ENCODE measurements at regions of chr1 and their contacts with region 1.

Region 1: DNA sequence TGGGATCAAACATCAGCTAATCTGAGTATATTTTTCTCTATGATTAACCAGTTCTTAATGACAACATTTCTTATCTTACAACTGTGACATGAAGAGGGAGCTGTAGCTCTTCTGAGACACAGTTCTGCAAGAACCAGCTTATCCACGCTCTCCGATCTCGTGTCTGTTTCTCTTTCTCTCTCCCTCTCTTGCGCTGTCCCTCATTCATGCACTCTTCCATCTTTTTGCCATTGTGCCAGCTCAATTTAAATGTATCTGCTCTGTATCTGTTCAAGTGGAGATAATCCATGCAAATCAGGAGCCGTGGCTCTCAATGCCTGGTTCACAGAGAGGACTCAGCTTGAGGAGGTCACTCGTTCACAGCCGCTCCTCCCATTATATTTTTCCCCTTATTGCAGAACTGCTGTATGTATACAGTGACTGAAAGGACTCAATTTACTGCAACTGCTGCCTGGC is 494.7 kb upstream of the ADGRL2 start:
- DNase-seq: no peak
- ATAC-seq: peak; percentile 89 to 92

Region 2: DNA sequence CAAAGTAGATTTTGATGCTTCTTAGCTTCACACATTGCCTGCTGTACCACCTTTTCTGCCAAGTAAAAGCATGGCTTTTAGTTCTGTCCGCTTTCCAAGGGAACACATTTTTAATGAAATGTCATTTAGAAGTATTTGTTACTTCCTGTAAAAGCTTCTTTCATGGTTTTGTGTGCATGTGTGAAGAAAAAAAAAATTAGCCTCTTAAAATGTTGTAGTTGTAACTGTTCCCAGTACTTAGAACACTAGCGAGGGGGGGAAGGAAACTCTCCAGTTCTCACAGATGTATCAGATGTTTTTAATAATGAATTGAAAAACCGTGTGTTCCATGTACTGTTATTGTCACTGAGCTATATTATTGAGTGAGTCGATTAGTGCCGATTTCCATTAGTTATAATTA is 73.6 kb before region 1 on chr1:
- intact Hi-C with region 1: loop called in 1 of 2 experiments (anchors 5 kb)
- DNase-seq: no peak
- ATAC-seq: peak in 1 of 2 donors; percentile 34

Region 3: GRCh38 chr1:81377406-81377805 is 71.4 kb after region 1 on chr1:
- intact Hi-C with region 1: no loop called
- DNase-seq: no peak
- ATAC-seq: no peak

Region 4: GRCh38 chr1:81760477-81761097 is 454.6 kb after region 1 on chr1:
- intact Hi-C with region 1: loop called in 1 of 2 experiments (anchors 10 kb)
- DNase-seq: no peak
- ATAC-seq: no peak

Region 5: DNA sequence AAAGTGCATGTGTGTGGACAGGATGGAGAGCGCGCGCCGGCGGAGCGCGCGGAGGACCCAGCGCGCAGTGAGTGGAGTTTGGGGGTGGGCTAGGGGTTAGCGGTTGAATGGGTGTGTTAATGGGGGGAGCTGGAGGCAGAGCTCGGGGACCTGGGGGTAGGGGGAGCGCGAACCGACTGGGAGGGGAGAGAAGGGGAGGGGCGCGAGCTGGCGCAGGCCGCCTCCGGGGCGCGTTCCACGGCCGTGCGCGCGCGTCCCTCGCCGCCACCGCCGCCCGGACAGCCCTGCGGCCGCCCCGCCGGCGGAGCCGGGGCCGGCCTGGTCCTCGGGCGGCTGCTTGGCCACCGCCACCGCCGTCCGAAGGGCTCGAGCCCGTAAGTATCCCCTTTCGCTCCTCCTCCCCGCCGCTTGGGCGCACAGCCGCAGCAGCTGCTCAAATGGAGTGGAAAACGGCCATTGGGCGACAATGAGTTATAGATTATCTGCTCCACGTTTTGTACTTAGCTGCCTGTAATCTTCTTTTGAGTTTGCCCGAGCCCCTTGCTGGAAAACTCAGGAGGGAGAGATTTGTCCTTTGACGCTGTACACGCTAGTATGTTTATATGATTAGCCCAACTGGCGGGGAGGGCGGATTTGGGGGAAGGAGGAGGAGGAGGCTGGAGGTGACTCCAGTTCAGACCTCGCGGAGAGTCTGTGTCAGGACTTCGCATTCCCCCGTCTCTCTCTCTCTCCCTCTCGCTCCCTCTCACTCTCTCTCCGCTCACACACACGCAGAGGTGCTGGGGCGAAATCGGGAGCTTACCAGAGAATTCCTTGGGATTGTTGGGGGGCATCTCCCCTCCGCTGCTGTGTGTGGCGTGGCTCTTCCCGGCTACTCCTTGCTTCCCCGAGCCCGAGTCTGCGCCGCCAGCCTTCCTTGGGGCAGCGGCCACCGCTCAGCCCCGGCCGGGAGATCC is 494.9 kb after region 1 on chr1 and contains the start of gene ADGRL2:
- intact Hi-C with region 1: loop called in 1 of 2 experiments (anchors 2 kb)
- DNase-seq: peak; percentile 78
- ATAC-seq: peak; percentile 83 to 90
- total RNA-seq, gene ADGRL2: 57.4 to 64.4 TPM